ENCODE measurements at regions of chr1 and their contacts with region 1.

Region 1: DNA sequence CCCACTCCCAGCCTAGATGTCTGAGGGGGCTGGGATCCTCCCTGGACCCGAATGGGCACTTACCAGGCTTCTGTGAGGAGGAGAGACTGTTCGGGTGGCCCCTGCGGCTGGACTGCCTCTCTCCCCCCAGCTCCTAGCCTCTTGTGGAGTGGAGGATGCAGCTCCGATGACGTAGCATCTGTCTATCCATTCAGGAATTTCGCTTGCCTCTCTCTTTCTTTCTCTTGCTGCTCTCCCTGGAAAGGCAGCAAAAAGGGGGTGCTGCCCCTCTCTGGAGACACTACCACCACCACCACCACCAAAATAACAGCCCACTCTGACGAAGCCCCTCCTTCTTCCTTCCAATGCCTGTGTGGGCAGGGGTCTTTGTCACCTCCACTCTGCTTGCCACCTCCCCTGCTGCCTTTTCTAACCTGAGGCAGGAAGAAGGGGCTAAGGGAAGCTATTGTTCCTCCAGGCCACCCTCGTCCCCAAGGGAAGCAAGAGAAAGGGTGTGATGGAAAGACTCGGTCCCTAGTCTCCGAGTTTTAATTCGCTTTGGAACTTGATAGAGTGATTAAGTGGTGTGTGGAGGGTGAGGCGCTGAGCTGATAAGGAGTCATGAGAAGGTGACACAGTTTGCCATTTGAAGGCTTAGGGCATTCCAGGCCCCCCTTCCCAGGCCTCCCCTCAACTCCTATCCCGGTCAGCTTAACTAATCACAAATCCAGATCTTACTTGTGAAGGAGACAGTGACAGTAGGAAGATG is 60.5 kb downstream of the RHBG start:
- DNase-seq: no peak
- ATAC-seq: peak; percentile 11
- H3K4me3 Mint-ChIP-seq: peak overlapping the region; percentile 58
- H3K27ac Mint-ChIP-seq: no peak overlapping the region
- H3K4me1 Mint-ChIP-seq: peaks cover 46% of the 10 kb centered on the region
- H3K27me3 Mint-ChIP-seq: peaks cover 100% of the 10 kb centered on the region
- CTCF ChIP-seq: no peak

Region 2: DNA sequence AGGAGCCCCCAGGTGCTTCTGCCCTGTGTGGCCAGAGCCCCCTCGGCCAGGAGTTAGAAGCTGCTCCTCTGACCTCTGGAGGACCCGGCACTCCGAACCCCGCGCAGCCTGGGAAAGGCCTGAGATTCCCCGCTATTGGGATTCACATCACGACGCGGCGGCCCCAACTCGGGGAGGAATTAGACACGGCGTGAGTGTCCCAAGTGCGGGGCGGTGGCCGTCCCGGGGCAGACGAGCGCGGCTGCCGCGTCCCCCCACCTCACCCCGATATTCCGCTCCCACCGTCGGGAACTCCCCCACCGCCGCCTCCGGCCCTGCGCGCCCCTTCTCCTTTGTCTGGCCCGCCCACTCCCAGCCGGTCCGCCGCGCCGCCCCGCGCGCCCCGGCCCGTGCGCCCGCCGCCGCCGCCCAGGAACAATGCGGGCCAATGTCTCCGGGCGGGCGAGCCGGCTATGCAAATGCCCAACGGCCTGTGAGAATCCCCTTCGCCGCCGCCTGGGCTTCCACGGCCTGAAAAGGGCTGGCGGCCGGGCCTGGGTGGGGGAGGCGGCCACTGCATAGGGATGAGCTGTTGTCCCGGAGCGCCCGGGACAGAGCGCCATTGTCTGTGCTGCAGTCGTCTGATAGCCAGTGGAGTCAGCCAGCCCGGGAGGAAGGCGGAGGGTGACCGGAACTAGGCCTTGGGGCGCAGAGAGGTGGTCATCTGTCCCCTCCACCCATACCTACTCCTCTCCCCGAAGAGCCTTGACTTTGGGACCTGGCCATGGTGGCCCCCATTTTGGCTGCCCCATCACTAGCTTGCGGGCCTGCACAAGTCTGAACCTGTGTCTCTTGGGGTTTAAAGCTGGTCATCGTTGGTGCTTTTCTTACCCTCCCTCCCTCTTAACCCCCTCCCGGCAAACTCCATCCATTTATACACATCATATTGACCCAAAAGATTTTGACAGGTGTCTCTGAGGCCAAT is 41.0 kb before region 1 on chr1:
- CTCF ChIA-PET with region 1: interaction called, 200 read pairs
- POLR2A ChIA-PET with region 1: no interaction called
- DNase-seq: peak; percentile 70
- ATAC-seq: peak; percentile 46
- H3K4me3 Mint-ChIP-seq: peak overlapping the region; percentile 60
- H3K27ac Mint-ChIP-seq: no peak overlapping the region
- H3K4me1 Mint-ChIP-seq: peaks cover 53% of the 10 kb centered on the region
- H3K27me3 Mint-ChIP-seq: peaks cover 59% of the 10 kb centered on the region
- CTCF ChIP-seq: no peak